ENCODE measurements at regions of chr6 and their contacts with region 1.

Region 1: DNA sequence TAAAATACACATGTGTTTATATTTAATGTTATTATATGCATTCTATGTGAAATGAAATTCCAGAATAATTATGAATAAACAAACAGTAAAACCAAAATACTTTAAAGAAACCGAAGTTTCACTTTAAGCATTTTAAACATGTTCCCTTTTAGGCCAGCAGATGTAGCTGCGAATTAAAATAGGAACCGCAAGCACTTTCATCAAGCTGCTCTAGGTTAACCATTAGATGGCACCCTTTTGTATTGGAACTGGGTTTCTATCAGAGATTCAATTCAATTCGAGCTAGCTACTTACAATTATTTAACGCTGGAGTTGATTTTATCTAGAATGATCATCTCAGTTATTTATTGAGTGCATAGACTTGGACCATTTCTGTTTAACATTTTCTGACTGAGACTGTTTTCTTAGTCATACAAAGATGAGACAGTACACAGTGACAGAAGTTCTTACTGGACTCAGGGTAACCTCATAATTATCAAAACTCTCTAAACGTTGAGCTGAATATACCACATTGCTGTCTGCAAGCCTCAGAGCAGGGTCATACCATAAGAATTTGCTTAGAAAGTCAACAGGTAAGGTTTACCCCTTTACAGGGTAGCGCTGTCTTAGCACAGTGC is 8.5 kb downstream of the TMEM242 start:
- DNase-seq: peak in 2 of 7 donors; percentile 23 to 51
- H3K4me3 ChIP-seq: no peak overlapping the region
- H3K27ac ChIP-seq: peak overlapping the region in 3 of 5 donors; percentile 33 to 63 (median 62)
- H3K4me1 ChIP-seq: peaks cover 11 to 23% of the 10 kb centered on the region in 2 donors
- H3K27me3 ChIP-seq: no peaks in the 10 kb centered on the region
- CTCF ChIP-seq: peak; percentile 80 to 97 (median 90)
- POLR2A ChIP-seq: no peak

Region 2: GRCh38 chr6:157597446-157598312 is 282.9 kb after region 1 on chr6:
- intact Hi-C with region 1: loop called (anchors 10 kb)
- DNase-seq: peak; percentile 36 to 79 (median 62)
- H3K4me3 ChIP-seq: no peak overlapping the region
- H3K27ac ChIP-seq: no peak overlapping the region
- H3K4me1 ChIP-seq: no peaks in the 10 kb centered on the region
- H3K27me3 ChIP-seq: no peaks in the 10 kb centered on the region
- CTCF ChIP-seq: peak; percentile 38 to 65 (median 60)
- POLR2A ChIP-seq: no peak

Region 3: GRCh38 chr6:157607317-157608109 is 292.7 kb after region 1 on chr6:
- intact Hi-C with region 1: loop called in 1 of 2 experiments (anchors 10 kb)
- DNase-seq: no peak
- H3K4me3 ChIP-seq: no peak overlapping the region
- H3K27ac ChIP-seq: no peak overlapping the region
- H3K4me1 ChIP-seq: no peaks in the 10 kb centered on the region
- H3K27me3 ChIP-seq: no peaks in the 10 kb centered on the region
- CTCF ChIP-seq: no peak
- POLR2A ChIP-seq: no peak

Region 4: GRCh38 chr6:157667211-157668008 is 352.6 kb after region 1 on chr6:
- intact Hi-C with region 1: loop called (anchors 5 to 10 kb)
- DNase-seq: peak; percentile 53 to 78 (median 62)
- H3K4me3 ChIP-seq: no peak overlapping the region
- H3K27ac ChIP-seq: no peak overlapping the region
- H3K4me1 ChIP-seq: peaks cover 0 to 32% of the 10 kb centered on the region in 2 donors
- H3K27me3 ChIP-seq: no peaks in the 10 kb centered on the region
- CTCF ChIP-seq: peak; percentile 67 to 91 (median 82)
- POLR2A ChIP-seq: no peak

Region 5: GRCh38 chr6:157764178-157765033 is 449.6 kb after region 1 on chr6:
- intact Hi-C with region 1: no loop called
- DNase-seq: peak; percentile 75 to 92 (median 89)
- H3K4me3 ChIP-seq: no peak overlapping the region
- H3K27ac ChIP-seq: peak overlapping the region; percentile 1 to 80 (median 51)
- H3K4me1 ChIP-seq: peaks cover 27 to 49% of the 10 kb centered on the region in 2 donors
- H3K27me3 ChIP-seq: no peaks in the 10 kb centered on the region
- CTCF ChIP-seq: no peak
- POLR2A ChIP-seq: no peak